ENCODE measurements at regions of chr15 and their contacts with region 1.

Region 1: DNA sequence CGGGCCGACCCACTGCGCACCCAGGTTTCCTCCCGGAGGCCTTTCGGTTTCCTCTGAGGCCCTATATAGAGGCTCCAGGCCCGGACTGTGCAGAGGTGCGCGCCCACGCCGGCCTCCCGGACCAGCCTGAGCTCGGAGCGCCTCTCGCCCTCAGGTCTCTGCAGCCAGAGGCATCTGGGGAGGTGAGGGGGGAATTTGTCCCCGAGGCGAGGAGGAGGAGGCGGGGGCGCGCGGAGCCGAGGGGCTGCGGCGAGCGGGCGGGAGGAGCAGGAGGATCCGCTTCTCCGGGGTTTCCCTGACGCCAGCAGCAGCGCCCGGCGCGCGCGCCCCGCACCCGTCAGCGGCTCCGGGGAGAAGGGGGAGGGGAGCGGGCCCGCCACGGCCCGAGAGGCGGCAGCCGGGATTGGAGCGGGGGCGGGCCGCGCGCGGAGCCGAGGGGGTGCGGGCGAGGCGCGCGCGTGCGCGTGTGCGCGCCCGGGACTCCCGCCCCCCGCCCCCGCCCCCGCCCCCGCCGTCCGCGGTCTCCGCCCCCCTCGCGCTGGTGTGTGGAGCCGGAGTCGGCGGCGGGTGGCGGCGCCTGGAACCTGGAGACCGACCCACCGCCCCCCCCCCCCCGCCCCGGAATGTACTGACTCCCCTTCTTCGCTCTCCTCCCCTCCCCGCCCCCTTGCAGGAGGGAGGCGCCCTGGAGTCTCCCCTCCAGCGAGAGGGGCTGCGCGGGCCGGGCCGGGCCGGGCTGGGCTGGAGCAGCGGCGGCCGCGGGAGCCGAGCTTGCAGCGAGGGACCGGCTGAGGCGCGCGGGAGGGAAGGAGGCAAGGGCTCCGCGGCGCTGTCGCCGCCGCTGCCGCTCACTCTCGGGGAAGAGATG is at the start of gene NEO1:
- DNase-seq: peak; percentile 81 to 89
- ATAC-seq: peak; percentile 72 to 77
- H3K4me3 ChIP-seq: peak within 1 kb of the TSS; percentile 93 to 99 (median 97)
- H3K27ac ChIP-seq: peak within 1 kb of the TSS; percentile 98 to 99 (median 98)
- H3K4me1 ChIP-seq: peaks cover 16 to 40% of the 10 kb centered on the region in 2 donors
- H3K27me3 ChIP-seq: no peaks in the 10 kb centered on the region
- CTCF ChIP-seq: no peak
- POLR2A ChIP-seq: peak; percentile 51 to 61
- total RNA-seq, gene NEO1: 13.8 to 32.0 (median 20.3) TPM

Region 2: DNA sequence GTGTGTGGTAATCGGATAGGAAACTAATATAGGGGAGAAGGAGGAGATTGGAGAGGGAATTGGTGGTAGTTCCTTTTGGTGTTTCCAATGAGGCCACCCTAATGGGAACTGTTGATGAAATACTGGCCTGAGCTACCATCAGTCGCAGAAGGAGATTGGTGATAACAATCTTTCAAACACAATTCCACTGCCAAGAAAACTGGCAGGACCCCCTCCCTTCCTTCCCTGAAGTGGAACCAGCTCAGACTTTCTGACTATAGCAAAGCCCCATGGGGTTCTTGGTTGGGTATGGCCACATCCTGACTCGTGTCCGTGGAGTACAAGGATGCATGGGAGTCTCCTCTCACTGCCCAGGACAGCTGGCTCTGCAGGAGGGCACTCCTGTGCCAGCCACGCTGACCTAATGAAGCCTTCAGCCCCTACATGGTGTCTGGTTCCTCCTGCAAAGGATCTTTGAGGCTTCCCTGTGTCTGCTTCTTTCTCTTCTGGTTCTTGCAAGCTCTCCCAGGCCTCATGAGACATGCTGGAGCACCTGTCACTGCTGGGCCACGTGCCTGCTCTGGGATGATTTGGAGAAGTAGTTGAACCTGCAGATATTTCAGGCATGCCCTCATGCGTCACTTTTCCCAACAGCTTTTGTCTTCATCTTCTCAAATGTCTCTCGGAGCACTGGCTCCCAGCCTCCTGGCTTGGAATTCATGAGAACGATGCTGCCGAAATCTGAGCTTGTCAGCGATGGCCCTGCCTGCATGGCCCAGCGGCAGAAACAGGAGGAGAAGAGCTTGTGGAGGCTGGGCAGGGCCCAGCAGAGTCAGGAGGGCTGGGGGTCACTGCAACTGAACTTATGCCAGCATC is 178.4 kb before region 1 on chr15:
- in situ Hi-C with region 1: no loop called
- intact Hi-C with region 1: loop called (anchors 1 kb)
- DNase-seq: peak; percentile 94 to 99
- ATAC-seq: peak; percentile 82 to 84
- H3K4me3 ChIP-seq: peak overlapping the region in 1 of 4 donors; percentile 1
- H3K27ac ChIP-seq: peak overlapping the region; percentile 87 to 93 (median 90)
- H3K4me1 ChIP-seq: peaks cover 56 to 62% of the 10 kb centered on the region in 2 donors
- H3K27me3 ChIP-seq: no peaks in the 10 kb centered on the region
- CTCF ChIP-seq: no peak
- POLR2A ChIP-seq: peak; percentile 32 to 42

Region 3: DNA sequence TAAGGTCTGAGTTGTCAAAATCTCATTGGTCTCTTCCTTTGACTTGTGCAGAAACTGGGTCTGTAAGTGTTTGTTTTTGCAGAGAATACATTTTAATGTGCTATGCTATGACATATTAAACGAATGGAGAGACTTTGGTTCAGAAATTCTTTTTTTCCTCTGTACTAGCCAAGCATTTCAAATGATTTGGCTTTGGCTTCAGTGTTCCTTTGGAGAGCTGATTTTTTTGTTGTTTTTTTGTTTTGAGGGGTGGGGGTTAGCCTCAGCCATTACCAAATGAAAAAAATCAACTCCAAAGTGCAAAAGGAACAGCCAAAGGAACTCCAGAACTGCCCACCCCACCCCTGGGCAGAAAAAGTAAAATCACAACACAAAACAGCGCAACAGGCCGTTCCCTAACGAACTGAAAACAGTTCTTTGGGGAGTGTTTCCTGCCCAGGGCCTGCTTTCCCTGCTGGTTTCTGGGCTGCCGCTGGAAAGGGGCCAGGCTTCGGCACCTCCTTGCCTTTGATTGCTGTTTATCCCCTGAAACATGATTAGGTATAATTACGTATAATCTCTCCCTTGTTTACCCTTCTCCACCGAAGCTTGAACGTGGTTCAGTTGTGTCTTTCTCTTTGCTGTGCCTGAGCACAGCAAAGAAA is 57.4 kb before region 1 on chr15:
- in situ Hi-C with region 1: no loop called
- intact Hi-C with region 1: loop called (anchors 5 kb)
- DNase-seq: no peak
- ATAC-seq: no peak
- H3K4me3 ChIP-seq: no peak overlapping the region
- H3K27ac ChIP-seq: no peak overlapping the region
- H3K4me1 ChIP-seq: peaks cover 10 to 23% of the 10 kb centered on the region in 2 donors
- H3K27me3 ChIP-seq: no peaks in the 10 kb centered on the region
- CTCF ChIP-seq: no peak
- POLR2A ChIP-seq: no peak

Region 4: GRCh38 chr15:73005446-73005845 is 46.6 kb before region 1 on chr15:
- in situ Hi-C with region 1: no loop called
- intact Hi-C with region 1: no loop called
- DNase-seq: no peak
- ATAC-seq: no peak
- H3K4me3 ChIP-seq: no peak overlapping the region
- H3K27ac ChIP-seq: no peak overlapping the region
- H3K4me1 ChIP-seq: peaks cover 17 to 23% of the 10 kb centered on the region in 2 donors
- H3K27me3 ChIP-seq: no peaks in the 10 kb centered on the region
- CTCF ChIP-seq: no peak
- POLR2A ChIP-seq: no peak

Region 5: DNA sequence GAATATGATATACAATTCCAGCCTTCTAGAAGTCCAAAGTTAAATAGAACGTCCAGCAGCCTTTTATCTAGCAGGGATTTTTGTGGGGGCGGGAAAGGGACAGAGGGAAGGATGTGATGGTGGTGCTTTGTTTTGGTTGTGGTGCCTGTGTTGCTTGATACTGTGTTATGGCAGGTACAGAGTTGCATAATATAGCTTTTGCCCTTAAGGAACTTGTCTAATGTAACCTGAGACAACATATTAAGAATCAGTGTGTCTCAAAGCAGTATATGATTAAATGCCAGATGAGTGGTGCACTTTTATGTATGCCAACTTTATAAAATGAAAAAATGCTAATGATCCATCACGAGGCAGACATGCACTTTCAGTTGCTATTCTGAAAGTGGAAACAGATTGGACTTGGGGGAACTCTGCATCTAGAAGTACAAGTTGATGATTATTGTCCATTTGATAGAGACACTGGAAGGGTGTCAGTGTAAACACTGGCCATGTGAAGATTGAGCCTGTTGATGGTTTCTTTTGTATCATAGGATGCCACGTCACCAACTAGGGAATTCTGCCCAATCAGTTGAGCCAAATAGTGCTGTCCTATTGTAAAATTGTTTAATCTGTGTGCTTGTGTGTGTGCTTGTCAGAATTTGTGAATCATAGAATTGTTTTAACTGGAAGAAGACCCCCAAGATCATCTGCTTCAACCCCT is 23.3 kb after region 1 on chr15:
- in situ Hi-C with region 1: no loop called
- intact Hi-C with region 1: loop called (anchors 2 kb)
- DNase-seq: no peak
- ATAC-seq: peak; percentile 46 to 55
- H3K4me3 ChIP-seq: peak overlapping the region in 2 of 4 donors; percentile 5 to 29
- H3K27ac ChIP-seq: peak overlapping the region; percentile 32 to 49 (median 46)
- H3K4me1 ChIP-seq: peaks cover 58 to 59% of the 10 kb centered on the region in 2 donors
- H3K27me3 ChIP-seq: no peaks in the 10 kb centered on the region
- CTCF ChIP-seq: no peak
- POLR2A ChIP-seq: no peak